B cell (primary cell): ENCODE measurements at regions of chr2 and their contacts with region 1.

Region 1: DNA sequence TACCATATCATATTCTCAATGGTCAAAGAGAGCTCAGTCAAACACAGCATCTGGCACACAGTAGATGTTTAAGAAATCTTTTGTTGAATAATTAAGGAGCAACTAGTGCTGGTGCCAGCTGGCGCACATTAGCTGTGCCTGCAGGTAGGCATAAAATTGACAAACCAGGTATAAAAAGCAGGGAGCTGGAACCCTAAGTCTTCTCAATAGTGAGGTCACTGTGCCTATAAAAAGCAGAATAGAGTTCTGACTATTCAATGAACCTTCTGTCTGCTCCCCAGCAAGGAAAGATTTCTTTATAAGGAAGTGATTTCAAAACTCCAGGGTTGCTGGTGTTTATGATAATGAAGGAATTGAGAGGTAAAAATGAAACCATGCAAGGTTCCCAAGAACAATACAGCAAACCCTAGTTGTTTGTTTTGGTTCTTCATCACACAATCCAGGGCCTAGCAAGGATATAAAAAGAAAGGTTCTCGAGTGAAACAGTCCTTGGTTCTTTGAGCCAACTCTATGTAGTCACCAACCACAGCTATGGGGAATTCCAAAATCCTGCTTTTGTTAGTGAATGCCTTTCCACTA is 76.1 kb downstream of the THADA start:
- DNase-seq: no peak
- ATAC-seq: no peak
- H3K4me3 ChIP-seq: no peak overlapping the region
- H3K4me3 Mint-ChIP-seq: no peak overlapping the region
- H3K27ac ChIP-seq: no peak overlapping the region
- H3K27ac Mint-ChIP-seq: peak overlapping the region; percentile 2
- H3K4me1 ChIP-seq: peaks cover 5% of the 10 kb centered on the region in 2 donors
- H3K4me1 Mint-ChIP-seq: peaks cover 22% of the 10 kb centered on the region
- H3K27me3 ChIP-seq: no peaks in the 10 kb centered on the region
- H3K27me3 Mint-ChIP-seq: no peaks in the 10 kb centered on the region
- CTCF ChIP-seq: no peak

Region 2: DNA sequence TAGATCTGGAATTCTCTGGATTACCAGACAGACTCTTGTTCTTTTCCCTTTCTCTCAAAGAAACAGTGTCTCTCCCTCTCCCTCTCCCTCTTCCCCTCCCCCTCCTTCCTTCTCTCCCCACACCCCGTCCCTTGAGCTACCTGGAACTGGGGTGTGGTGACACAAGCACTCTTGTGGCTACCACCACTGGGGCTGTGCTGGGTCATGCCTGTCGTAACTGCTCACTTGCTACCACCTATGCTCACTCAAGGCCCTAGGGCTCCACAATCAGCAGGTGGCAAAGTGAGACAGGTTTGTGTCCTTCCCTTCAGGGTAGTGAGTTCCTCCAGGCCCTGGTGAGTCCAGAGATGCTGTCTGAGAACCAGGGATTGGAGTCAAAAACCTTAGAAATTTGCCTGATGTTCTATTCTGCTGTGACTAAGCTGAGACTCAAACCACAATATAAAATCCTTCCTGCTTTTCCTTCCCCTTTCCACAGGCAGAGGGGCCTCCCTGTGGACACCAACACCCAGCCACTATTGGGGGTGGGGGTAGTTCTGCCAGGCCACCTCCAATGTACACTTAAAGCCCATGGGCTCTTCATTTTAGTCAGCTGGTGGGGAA is 826.6 kb before region 1 on chr2:
- CTCF ChIA-PET with region 1: no interaction called
- POLR2A ChIA-PET with region 1: no interaction called
- intact Hi-C with region 1: loop called (anchors 10 kb)
- DNase-seq: no peak
- ATAC-seq: no peak
- H3K4me3 ChIP-seq: no peak overlapping the region
- H3K4me3 Mint-ChIP-seq: no peak overlapping the region
- H3K27ac ChIP-seq: no peak overlapping the region
- H3K27ac Mint-ChIP-seq: no peak overlapping the region
- H3K4me1 ChIP-seq: no peaks in the 10 kb centered on the region
- H3K4me1 Mint-ChIP-seq: no peaks in the 10 kb centered on the region
- H3K27me3 ChIP-seq: no peaks in the 10 kb centered on the region
- H3K27me3 Mint-ChIP-seq: no peaks in the 10 kb centered on the region
- CTCF ChIP-seq: no peak